ENCODE measurements at regions of chr9 and their contacts with region 1.

Region 1: GRCh38 chr9:12212860-12213259 is 480.3 kb upstream of the TYRP1 start:
- DNase-seq: no peak
- H3K4me3 ChIP-seq: no peak overlapping the region
- H3K4me3 Mint-ChIP-seq: no peak overlapping the region
- H3K27ac ChIP-seq: no peak overlapping the region
- H3K27ac Mint-ChIP-seq: no peak overlapping the region
- H3K4me1 ChIP-seq: no peaks in the 10 kb centered on the region
- H3K4me1 Mint-ChIP-seq: no peaks in the 10 kb centered on the region
- H3K27me3 ChIP-seq: no peaks in the 10 kb centered on the region
- H3K27me3 Mint-ChIP-seq: no peaks in the 10 kb centered on the region

Region 2: GRCh38 chr9:12166518-12166917 is 46.3 kb before region 1 on chr9:
- CTCF ChIA-PET with region 1: no interaction called
- POLR2A ChIA-PET with region 1: no interaction called
- intact Hi-C with region 1: loop called (anchors 5 kb)
- DNase-seq: no peak
- H3K4me3 ChIP-seq: no peak overlapping the region
- H3K4me3 Mint-ChIP-seq: no peak overlapping the region
- H3K27ac ChIP-seq: no peak overlapping the region
- H3K27ac Mint-ChIP-seq: no peak overlapping the region
- H3K4me1 ChIP-seq: no peaks in the 10 kb centered on the region
- H3K4me1 Mint-ChIP-seq: no peaks in the 10 kb centered on the region
- H3K27me3 ChIP-seq: no peaks in the 10 kb centered on the region
- H3K27me3 Mint-ChIP-seq: no peaks in the 10 kb centered on the region

Region 3: DNA sequence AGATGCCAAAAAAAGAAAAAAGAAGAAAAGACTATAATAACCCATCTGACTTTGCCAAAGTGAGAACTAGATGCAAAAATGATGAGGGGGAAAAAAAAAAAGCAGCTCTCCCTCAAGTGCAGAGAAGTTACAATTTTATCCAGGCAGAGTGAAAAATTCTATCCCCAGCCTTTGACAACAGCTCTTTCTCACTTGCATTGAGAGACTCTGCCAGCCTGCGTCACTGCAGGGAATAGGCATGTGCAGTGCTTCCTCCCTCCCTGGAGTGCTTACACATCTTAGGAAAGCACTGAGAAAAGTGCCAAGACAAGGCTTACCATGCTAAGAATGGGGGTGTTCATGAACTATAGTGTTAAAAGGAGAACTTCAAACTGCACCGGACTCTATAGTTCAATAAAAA is 61.7 kb after region 1 on chr9:
- CTCF ChIA-PET with region 1: no interaction called
- POLR2A ChIA-PET with region 1: no interaction called
- intact Hi-C with region 1: no loop called
- DNase-seq: no peak
- H3K4me3 ChIP-seq: no peak overlapping the region
- H3K4me3 Mint-ChIP-seq: no peak overlapping the region
- H3K27ac ChIP-seq: no peak overlapping the region
- H3K27ac Mint-ChIP-seq: no peak overlapping the region
- H3K4me1 ChIP-seq: no peaks in the 10 kb centered on the region
- H3K4me1 Mint-ChIP-seq: no peaks in the 10 kb centered on the region
- H3K27me3 ChIP-seq: no peaks in the 10 kb centered on the region
- H3K27me3 Mint-ChIP-seq: no peaks in the 10 kb centered on the region

Measured in CD4-positive, alpha-beta memory T cell (primary cell).